Naive thymus-derived CD4-positive, alpha-beta T cell (primary cell): ENCODE measurements at regions of chr22 and their contacts with region 1.

Region 1: DNA sequence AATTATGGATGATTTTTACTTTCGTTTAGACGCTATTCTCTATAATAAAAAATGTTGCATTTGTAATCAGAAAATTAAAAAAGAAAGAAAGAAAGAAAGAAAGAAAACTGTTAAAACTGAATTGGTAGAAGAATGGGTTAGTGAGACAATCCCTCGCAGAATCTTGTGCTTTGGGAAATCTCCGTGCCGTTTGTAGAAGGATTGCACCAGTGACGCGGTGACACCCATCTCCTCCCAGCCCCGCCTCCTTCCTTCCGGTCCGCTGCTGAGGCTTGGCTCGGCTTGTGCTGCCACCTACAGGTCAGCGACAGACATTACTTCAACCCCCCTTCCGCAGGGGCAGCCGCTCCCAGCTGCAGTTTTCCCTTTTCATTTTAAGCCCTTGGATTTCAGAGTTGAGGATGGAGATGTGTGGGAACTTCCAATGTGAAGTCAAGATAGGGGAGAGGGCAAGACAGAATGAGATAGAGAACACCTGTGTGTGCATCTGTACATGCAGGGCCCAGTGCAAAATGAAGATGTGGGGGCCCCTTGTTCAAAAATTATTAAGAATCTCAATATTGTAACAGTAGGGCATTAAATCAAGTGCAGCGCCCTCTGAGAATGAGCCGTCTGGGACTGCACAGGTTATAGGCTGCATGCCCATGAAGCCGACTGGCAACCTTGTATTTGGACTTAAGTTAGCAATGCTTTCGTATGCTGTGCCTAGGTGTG is 41.1 kb downstream of the TST start:
- DNase-seq: peak; percentile 76 to 90 (median 88)
- ATAC-seq: peak; percentile 98
- H3K4me3 ChIP-seq: peak overlapping the region; percentile 69
- H3K4me3 Mint-ChIP-seq: peak overlapping the region; percentile 87 to 99 (median 96)
- H3K27ac ChIP-seq: peak overlapping the region; percentile 77
- H3K27ac Mint-ChIP-seq: peak overlapping the region; percentile 81 to 97 (median 96)
- H3K4me1 ChIP-seq: peaks cover 0 to 4% of the 10 kb centered on the region in 2 donors
- H3K4me1 Mint-ChIP-seq: peaks cover 5 to 16% (median 9%) of the 10 kb centered on the region in 7 donors
- H3K27me3 ChIP-seq: no peaks in the 10 kb centered on the region
- H3K27me3 Mint-ChIP-seq: peaks cover 0 to 25% (median 4%) of the 10 kb centered on the region in 5 donors

Region 2: DNA sequence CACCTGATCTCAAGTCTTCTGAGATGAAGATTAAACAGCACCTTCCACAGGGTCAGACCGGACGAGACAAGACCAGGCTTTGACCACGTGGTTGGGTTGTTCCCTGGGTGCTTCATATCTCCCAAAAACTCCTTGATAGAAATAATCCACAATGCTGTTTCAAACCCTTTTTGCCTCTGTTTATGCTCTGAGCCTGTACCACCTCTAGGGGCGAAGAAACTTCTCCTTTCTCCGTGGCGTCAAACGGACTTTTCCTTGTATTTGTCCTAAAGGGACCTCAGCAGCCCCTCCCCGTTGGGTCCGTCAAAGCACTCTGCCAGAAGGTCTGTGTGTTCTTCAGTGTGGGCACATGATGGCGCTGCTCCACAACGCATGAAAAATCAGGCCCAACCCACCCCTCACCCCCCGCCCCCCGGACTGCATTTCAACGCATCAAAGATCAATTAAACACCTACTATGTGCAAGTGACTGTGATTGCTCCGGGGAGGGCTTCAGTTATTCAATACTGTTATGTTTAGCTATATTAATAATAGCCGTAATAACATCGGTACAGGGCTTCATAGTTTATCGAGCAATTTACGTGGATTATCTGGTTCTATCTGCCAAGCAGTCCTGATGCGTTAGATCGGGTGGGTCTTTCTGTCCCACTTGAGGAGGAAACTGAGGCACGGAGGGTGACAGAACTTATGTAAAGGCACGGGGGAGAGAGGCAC is 431.9 kb before region 1 on chr22:
- CTCF ChIA-PET with region 1: no interaction called
- POLR2A ChIA-PET with region 1: no interaction called
- intact Hi-C with region 1: loop called in 1 of 2 experiments (anchors 5 kb)
- DNase-seq: peak in 3 of 9 donors; percentile 7 to 34 (median 10)
- ATAC-seq: peak; percentile 63
- H3K4me3 ChIP-seq: no peak overlapping the region
- H3K4me3 Mint-ChIP-seq: no peak overlapping the region
- H3K27ac ChIP-seq: no peak overlapping the region
- H3K27ac Mint-ChIP-seq: no peak overlapping the region
- H3K4me1 ChIP-seq: no peaks in the 10 kb centered on the region
- H3K4me1 Mint-ChIP-seq: peaks cover 0 to 37% (median 5%) of the 10 kb centered on the region in 7 donors
- H3K27me3 ChIP-seq: no peaks in the 10 kb centered on the region
- H3K27me3 Mint-ChIP-seq: peaks cover 8 to 24% (median 15%) of the 10 kb centered on the region in 5 donors

Region 3: GRCh38 chr22:36775964-36776669 is 202.0 kb before region 1 on chr22 and contains the start of gene IFT27:
- CTCF ChIA-PET with region 1: interaction called, 14 read pairs
- POLR2A ChIA-PET with region 1: interaction called, 6 read pairs
- intact Hi-C with region 1: loop called in 1 of 2 experiments (anchors 1 kb)
- DNase-seq: peak; percentile 72 to 99 (median 98)
- ATAC-seq: peak; percentile 92
- H3K4me3 ChIP-seq: peak within 1 kb of the TSS; percentile 65
- H3K4me3 Mint-ChIP-seq: peak within 1 kb of the TSS; percentile 85 to 97 (median 92)
- H3K27ac ChIP-seq: peak within 1 kb of the TSS; percentile 90
- H3K27ac Mint-ChIP-seq: peak within 1 kb of the TSS; percentile 92 to 99 (median 96)
- H3K4me1 ChIP-seq: peaks cover 13 to 15% of the 10 kb centered on the region in 2 donors
- H3K4me1 Mint-ChIP-seq: peaks cover 18 to 44% (median 31%) of the 10 kb centered on the region in 7 donors
- H3K27me3 ChIP-seq: no peaks in the 10 kb centered on the region
- H3K27me3 Mint-ChIP-seq: no peaks in the 10 kb centered on the region
- total RNA-seq, gene IFT27: 16.6 to 40.9 (median 32.0) TPM

Region 4: GRCh38 chr22:36856121-36856791 is 121.8 kb before region 1 on chr22:
- CTCF ChIA-PET with region 1: interaction called, 11 read pairs
- POLR2A ChIA-PET with region 1: interaction called, 3 read pairs
- intact Hi-C with region 1: loop called (anchors 1 kb)
- DNase-seq: peak; percentile 79 to 99 (median 89)
- ATAC-seq: peak; percentile 92
- H3K4me3 ChIP-seq: no peak overlapping the region
- H3K4me3 Mint-ChIP-seq: peak overlapping the region in 8 of 10 donors; percentile 27 to 75 (median 56)
- H3K27ac ChIP-seq: no peak overlapping the region
- H3K27ac Mint-ChIP-seq: peak overlapping the region in 3 of 9 donors; percentile 1 to 38 (median 32)
- H3K4me1 ChIP-seq: peaks cover 0 to 15% of the 10 kb centered on the region in 2 donors
- H3K4me1 Mint-ChIP-seq: peaks cover 17 to 45% (median 21%) of the 10 kb centered on the region in 7 donors
- H3K27me3 ChIP-seq: no peaks in the 10 kb centered on the region
- H3K27me3 Mint-ChIP-seq: peaks cover 0 to 5% (median under 1%) of the 10 kb centered on the region in 5 donors

Region 5: DNA sequence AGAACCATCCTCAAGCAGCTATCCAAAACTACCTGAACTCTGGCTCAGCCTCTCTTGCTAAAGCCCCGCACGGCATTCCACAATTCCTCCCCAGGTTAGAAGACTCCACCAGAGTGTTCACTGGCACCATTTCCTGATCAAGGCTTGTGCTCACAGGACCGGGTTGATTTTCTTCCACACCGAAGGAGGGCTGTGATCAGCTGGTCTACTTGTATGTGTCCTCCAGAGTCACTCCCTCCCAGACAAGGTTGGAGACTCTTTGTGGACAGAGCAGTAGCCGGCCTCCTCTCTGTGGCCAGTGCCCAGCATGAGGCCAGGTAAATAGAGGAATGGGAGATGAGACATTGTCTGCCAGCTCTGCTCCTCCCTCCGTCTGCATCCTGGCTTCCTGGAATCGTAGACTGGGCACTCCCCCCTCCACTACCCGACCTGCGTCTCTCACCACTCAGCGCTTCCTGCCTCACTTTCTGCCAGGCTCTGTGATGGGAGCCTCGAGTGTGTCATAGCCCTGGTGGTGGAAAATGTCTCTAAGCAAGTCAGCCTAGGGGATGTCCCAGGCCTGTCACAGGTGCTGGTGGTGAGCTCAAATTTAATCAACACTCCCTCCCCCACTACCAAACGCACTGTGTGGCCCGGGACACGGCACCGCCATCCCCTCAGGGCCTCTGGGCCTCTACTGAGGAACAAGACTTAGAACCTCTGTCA is 143.9 kb after region 1 on chr22:
- CTCF ChIA-PET with region 1: no interaction called
- POLR2A ChIA-PET with region 1: interaction called, 3 read pairs
- intact Hi-C with region 1: loop called in 1 of 2 experiments (anchors 5 kb)
- DNase-seq: peak; percentile 62 to 98 (median 94)
- ATAC-seq: peak; percentile 99
- H3K4me3 ChIP-seq: peak overlapping the region; percentile 30
- H3K4me3 Mint-ChIP-seq: peak overlapping the region; percentile 69 to 91 (median 79)
- H3K27ac ChIP-seq: peak overlapping the region; percentile 96
- H3K27ac Mint-ChIP-seq: peak overlapping the region; percentile 95 to 100 (median 98)
- H3K4me1 ChIP-seq: peaks cover 21 to 30% of the 10 kb centered on the region in 2 donors
- H3K4me1 Mint-ChIP-seq: peaks cover 19 to 86% (median 65%) of the 10 kb centered on the region in 7 donors
- H3K27me3 ChIP-seq: no peaks in the 10 kb centered on the region
- H3K27me3 Mint-ChIP-seq: peaks cover 0 to 2% (median 0%) of the 10 kb centered on the region in 5 donors